Posterior vena cava (tissue), 2 donors: ENCODE measurements at regions of chr11 and their contacts with region 1.

Region 1: GRCh38 chr11:19032990-19033389 is 27.5 kb downstream of the MRGPRX2 start:
- DNase-seq: no peak

Region 2: GRCh38 chr11:19076744-19077589 is 44.0 kb after region 1 on chr11:
- intact Hi-C with region 1: no loop called
- DNase-seq: peak; percentile 84

Region 3: GRCh38 chr11:19176629-19177186 is 143.7 kb after region 1 on chr11:
- intact Hi-C with region 1: loop called in 1 of 2 experiments (anchors 5 kb)
- DNase-seq: no peak

Region 4: DNA sequence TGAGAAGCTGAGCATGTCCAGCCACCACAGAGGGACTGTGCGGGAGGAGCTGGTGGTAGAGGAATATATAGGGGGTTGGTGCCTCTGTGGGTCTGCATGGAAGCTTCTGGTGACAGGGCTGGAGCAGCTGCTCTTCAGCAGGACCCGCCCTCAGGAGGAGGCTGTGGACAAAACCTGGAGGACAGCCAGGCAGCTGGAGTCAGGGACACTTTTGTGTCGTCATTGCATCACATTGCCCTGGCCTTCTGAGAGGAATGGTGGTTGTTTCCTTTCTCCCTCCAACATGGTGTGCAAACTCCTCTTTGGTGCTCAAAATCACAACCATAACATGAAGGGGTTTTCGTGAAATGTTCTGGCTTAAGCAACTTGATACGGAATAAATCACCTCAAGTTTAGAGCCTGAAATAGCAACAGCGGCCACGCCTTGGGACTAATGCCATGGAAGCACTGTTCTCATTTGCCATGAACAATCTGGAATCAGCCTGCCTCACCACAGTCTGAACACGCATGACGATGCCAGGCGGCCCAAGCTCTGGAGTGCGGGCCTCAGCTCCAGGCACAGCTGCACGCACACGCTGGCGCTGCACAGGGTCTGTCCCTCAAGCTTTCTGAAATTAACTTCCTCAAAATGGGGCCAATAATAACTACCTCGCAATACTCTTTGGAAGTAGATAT is 185.9 kb after region 1 on chr11:
- intact Hi-C with region 1: no loop called
- DNase-seq: no peak

Region 5: GRCh38 chr11:19539861-19540260 is 506.9 kb after region 1 on chr11:
- intact Hi-C with region 1: loop called in 1 of 2 experiments (anchors 10 kb)
- DNase-seq: no peak